ENCODE measurements at regions of chr5 and their contacts with region 1.

Region 1: DNA sequence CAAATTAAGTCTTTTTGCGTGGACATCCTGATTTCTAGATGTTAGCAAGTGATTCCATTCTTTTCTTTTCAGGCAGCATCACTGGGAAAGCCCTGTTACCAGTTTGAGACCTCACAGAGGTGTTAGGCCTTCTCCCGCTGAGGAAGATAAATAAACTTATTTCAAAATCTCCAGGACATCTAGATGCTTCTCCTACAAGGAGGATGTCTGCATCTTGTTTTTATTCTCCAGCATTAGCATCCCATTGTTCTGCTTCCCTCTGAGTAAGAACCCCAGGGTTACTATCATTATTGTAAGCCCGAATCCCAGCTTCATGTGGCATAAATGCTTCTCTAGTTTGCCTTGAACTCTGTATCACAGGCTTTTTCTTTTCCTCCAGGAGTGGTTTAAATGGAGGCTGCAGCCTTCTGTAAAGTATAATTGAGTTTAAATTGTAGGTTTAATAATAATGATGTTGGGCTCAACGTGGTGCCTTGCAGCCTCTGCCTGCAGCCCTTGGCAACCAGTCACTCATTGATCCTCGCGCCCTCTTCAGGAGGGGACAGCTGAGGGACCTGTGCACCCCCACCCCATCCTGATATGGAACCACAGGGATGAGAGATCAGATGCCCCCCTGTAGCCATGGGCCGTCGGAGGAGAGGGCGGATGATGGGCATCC is 114.9 kb downstream of the PDZD2 start:
- DNase-seq: no peak
- H3K4me3 ChIP-seq: no peak overlapping the region
- H3K27ac ChIP-seq: no peak overlapping the region
- H3K4me1 ChIP-seq: no peaks in the 10 kb centered on the region
- H3K27me3 ChIP-seq: no peaks in the 10 kb centered on the region
- CTCF ChIP-seq: no peak
- POLR2A ChIP-seq: no peak

Region 2: GRCh38 chr5:31133488-31133887 is 620.3 kb before region 1 on chr5:
- intact Hi-C with region 1: no loop called
- DNase-seq: no peak
- H3K4me3 ChIP-seq: no peak overlapping the region
- H3K27ac ChIP-seq: no peak overlapping the region
- H3K4me1 ChIP-seq: no peaks in the 10 kb centered on the region
- H3K27me3 ChIP-seq: no peaks in the 10 kb centered on the region
- CTCF ChIP-seq: no peak
- POLR2A ChIP-seq: no peak

Region 3: GRCh38 chr5:31701642-31702299 is 52.1 kb before region 1 on chr5:
- intact Hi-C with region 1: loop called (anchors 2 kb)
- DNase-seq: no peak
- H3K4me3 ChIP-seq: no peak overlapping the region
- H3K27ac ChIP-seq: no peak overlapping the region
- H3K4me1 ChIP-seq: no peaks in the 10 kb centered on the region
- H3K27me3 ChIP-seq: no peaks in the 10 kb centered on the region
- CTCF ChIP-seq: no peak
- POLR2A ChIP-seq: no peak

Region 4: GRCh38 chr5:31767335-31768031 is 13.7 kb after region 1 on chr5:
- intact Hi-C with region 1: no loop called
- DNase-seq: no peak
- H3K4me3 ChIP-seq: no peak overlapping the region
- H3K27ac ChIP-seq: no peak overlapping the region
- H3K4me1 ChIP-seq: no peaks in the 10 kb centered on the region
- H3K27me3 ChIP-seq: no peaks in the 10 kb centered on the region
- CTCF ChIP-seq: no peak
- POLR2A ChIP-seq: no peak